ENCODE measurements at regions of chr11 and their contacts with region 1.

Region 1: DNA sequence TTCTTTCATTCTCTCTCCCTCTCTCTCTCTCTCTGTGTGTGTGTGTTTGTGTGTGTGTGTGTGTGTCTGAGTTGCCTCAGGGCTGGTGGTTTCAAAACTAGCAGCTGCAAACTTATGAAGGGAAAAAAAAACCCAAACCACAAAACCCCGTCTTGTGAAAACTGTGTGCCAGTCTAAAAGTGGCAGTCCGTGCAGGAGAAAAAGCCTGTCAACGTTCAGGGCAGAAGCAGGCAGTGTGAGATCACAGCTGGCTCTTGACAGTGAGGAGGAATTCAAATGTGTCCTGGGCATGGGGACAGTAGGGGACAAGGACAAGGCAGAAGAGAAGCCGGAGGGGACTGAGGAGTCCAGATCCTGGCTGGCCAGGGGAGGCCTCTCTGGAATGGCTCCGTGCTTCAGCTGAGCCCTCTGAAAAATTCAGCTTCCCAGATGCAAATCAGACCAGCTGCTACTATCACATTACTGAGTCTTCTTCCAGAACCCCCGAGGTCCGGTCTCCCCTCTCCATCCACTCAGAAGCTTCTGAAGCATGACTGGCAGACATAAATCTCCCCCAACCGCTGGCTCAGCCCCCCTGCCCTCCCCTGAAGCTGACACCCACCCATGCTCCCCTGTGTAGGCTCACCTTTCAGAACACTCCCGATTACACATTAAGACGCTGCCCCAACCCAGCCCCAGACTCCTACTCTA is 31.9 kb downstream of the FLI1 start:
- DNase-seq: peak; percentile 65 to 70 (median 67)
- H3K4me3 ChIP-seq: peak overlapping the region; percentile 5 to 73 (median 27)
- H3K4me3 Mint-ChIP-seq: peak overlapping the region; percentile 56 to 91
- H3K27ac ChIP-seq: peak overlapping the region; percentile 92 to 94
- H3K27ac Mint-ChIP-seq: peak overlapping the region; percentile 94 to 99 (median 97)
- H3K4me1 ChIP-seq: peaks cover 100% of the 10 kb centered on the region in 2 donors
- H3K4me1 Mint-ChIP-seq: peaks cover 99% of the 10 kb centered on the region
- H3K27me3 ChIP-seq: no peaks in the 10 kb centered on the region
- H3K27me3 Mint-ChIP-seq: peaks cover 0 to 7% (median 0%) of the 10 kb centered on the region in 3 donors
- CTCF ChIP-seq: no peak

Region 2: GRCh38 chr11:128582496-128583366 is 143.0 kb before region 1 on chr11:
- intact Hi-C with region 1: loop called in 1 of 2 experiments (anchors 10 kb)
- DNase-seq: peak; percentile 44 to 75 (median 54)
- H3K4me3 ChIP-seq: peak overlapping the region in 1 of 3 experiments; percentile 22
- H3K4me3 Mint-ChIP-seq: peak overlapping the region; percentile 28 to 86
- H3K27ac ChIP-seq: peak overlapping the region; percentile 12 to 63
- H3K27ac Mint-ChIP-seq: peak overlapping the region; percentile 75 to 94 (median 86)
- H3K4me1 ChIP-seq: peaks cover 38 to 53% of the 10 kb centered on the region in 2 donors
- H3K4me1 Mint-ChIP-seq: peaks cover 53% of the 10 kb centered on the region
- H3K27me3 ChIP-seq: no peaks in the 10 kb centered on the region
- H3K27me3 Mint-ChIP-seq: peaks cover 0 to 4% (median 0%) of the 10 kb centered on the region in 3 donors
- CTCF ChIP-seq: no peak

Region 3: GRCh38 chr11:128621601-128622501 is 103.9 kb before region 1 on chr11:
- intact Hi-C with region 1: no loop called
- DNase-seq: peak in 1 of 3 donors; percentile 19
- H3K4me3 ChIP-seq: no peak overlapping the region
- H3K4me3 Mint-ChIP-seq: no peak overlapping the region
- H3K27ac ChIP-seq: no peak overlapping the region
- H3K27ac Mint-ChIP-seq: peak overlapping the region in 1 of 7 donors; percentile 51
- H3K4me1 ChIP-seq: peaks cover 14 to 20% of the 10 kb centered on the region in 2 donors
- H3K4me1 Mint-ChIP-seq: peaks cover 29% of the 10 kb centered on the region
- H3K27me3 ChIP-seq: no peaks in the 10 kb centered on the region
- H3K27me3 Mint-ChIP-seq: peaks cover 7 to 11% (median 8%) of the 10 kb centered on the region in 3 donors
- CTCF ChIP-seq: no peak

Measured in CD14-positive monocyte (primary cell).